ENCODE measurements at regions of chr16 and their contacts with region 1.

Region 1: DNA sequence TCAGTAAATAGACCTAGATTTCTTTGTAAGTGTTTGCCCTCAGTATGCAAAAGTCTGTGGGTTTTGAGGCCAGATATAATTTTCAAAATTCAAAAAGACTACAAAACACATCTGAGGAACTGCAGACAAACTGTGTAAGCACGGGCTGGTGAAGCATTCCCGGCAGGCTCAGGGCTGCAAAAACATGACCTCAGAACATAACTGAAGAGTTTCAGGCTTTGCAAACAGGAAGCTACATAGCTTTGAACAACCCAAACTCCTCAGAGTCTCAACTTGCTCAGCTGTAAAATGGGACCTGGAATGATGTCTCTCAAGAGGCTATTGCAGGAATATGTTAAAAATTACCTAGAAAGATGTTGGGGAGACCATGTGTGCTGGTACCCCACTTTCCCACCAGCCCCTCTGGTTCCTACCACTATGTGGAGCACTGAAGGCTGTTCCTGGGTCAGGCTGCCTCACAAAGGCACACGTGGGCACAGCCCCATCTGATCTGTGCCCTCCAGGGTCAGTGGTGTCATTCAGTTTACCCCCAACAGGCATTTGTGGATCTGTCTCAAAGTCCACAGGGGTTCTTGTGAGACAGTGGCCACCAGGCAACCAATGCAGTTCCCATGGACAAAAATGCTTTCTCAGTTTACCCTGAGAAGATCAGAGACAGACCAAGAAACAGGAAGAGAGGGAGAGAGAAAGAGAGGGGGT is 72.9 kb downstream of the CREBBP start:
- DNase-seq: no peak
- H3K4me3 Mint-ChIP-seq: peak overlapping the region; percentile 31
- H3K27ac Mint-ChIP-seq: peak overlapping the region; percentile 64
- H3K4me1 Mint-ChIP-seq: peaks cover 79% of the 10 kb centered on the region
- H3K27me3 Mint-ChIP-seq: no peaks in the 10 kb centered on the region

Region 2: DNA sequence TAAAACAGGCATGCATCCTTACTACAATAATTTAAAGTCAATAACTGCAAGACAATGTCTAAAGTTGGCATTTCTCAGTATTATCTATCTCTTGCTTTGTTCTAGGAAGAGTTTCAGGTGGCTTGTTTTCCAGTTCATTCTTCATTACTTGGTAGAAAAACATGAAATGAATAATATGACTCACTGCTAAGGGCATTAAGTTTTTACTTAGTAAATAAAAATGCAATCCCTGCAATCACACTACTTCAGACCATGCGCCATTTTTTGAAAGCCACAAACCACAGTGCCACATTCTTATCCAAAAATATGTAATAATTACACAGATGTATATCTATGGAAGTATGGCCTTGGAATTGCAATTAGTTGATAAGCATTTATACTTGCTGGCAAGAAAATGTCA is 17.5 kb after region 1 on chr16:
- intact Hi-C with region 1: loop called (anchors 2 kb)
- DNase-seq: no peak
- H3K4me3 Mint-ChIP-seq: no peak overlapping the region
- H3K27ac Mint-ChIP-seq: peak overlapping the region; percentile 37
- H3K4me1 Mint-ChIP-seq: peaks cover 65% of the 10 kb centered on the region
- H3K27me3 Mint-ChIP-seq: no peaks in the 10 kb centered on the region

Region 3: GRCh38 chr16:3922276-3922675 is 114.7 kb after region 1 on chr16:
- intact Hi-C with region 1: no loop called
- DNase-seq: no peak
- H3K4me3 Mint-ChIP-seq: no peak overlapping the region
- H3K27ac Mint-ChIP-seq: no peak overlapping the region
- H3K4me1 Mint-ChIP-seq: no peaks in the 10 kb centered on the region
- H3K27me3 Mint-ChIP-seq: peaks cover 9% of the 10 kb centered on the region

Region 4: GRCh38 chr16:3971261-3971660 is 163.7 kb after region 1 on chr16:
- intact Hi-C with region 1: no loop called
- DNase-seq: no peak
- H3K4me3 Mint-ChIP-seq: no peak overlapping the region
- H3K27ac Mint-ChIP-seq: no peak overlapping the region
- H3K4me1 Mint-ChIP-seq: no peaks in the 10 kb centered on the region
- H3K27me3 Mint-ChIP-seq: no peaks in the 10 kb centered on the region

Region 5: GRCh38 chr16:4152266-4152665 is 344.7 kb after region 1 on chr16:
- intact Hi-C with region 1: no loop called
- DNase-seq: no peak
- H3K4me3 Mint-ChIP-seq: no peak overlapping the region
- H3K27ac Mint-ChIP-seq: no peak overlapping the region
- H3K4me1 Mint-ChIP-seq: no peaks in the 10 kb centered on the region
- H3K27me3 Mint-ChIP-seq: peaks cover 2% of the 10 kb centered on the region